ENCODE measurements at regions of chr18 and their contacts with region 1.

Region 1: DNA sequence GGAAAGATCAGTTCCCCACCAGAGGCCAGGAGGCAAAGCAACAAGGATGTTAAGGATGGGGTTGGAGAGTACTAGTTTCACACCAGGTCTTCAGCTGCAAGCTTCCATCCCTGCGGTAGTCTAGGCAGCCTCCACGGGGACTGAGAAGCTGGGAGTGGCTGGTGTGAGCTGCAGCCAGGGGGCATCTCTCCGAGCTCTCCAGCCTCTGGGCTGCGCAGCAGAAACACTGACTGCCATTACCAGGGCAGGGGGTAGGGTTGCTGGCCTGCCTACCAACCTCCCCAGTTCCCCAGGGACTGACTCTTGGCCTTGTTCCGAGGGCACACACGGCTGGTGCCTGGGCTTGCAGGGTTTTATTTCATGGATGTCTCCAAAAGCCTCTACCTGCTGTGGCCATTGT is 15.9 kb downstream of the GATA6 start:
- DNase-seq: no peak
- ATAC-seq: no peak
- H3K4me3 ChIP-seq: no peak overlapping the region
- H3K4me3 Mint-ChIP-seq: no peak overlapping the region
- H3K27ac ChIP-seq: no peak overlapping the region
- H3K27ac Mint-ChIP-seq: no peak overlapping the region
- H3K4me1 ChIP-seq: no peaks in the 10 kb centered on the region
- H3K4me1 Mint-ChIP-seq: no peaks in the 10 kb centered on the region
- H3K27me3 ChIP-seq: peaks cover 3 to 9% of the 10 kb centered on the region in 2 experiments
- H3K27me3 Mint-ChIP-seq: peaks cover 39% of the 10 kb centered on the region
- CTCF ChIP-seq: no peak

Region 2: DNA sequence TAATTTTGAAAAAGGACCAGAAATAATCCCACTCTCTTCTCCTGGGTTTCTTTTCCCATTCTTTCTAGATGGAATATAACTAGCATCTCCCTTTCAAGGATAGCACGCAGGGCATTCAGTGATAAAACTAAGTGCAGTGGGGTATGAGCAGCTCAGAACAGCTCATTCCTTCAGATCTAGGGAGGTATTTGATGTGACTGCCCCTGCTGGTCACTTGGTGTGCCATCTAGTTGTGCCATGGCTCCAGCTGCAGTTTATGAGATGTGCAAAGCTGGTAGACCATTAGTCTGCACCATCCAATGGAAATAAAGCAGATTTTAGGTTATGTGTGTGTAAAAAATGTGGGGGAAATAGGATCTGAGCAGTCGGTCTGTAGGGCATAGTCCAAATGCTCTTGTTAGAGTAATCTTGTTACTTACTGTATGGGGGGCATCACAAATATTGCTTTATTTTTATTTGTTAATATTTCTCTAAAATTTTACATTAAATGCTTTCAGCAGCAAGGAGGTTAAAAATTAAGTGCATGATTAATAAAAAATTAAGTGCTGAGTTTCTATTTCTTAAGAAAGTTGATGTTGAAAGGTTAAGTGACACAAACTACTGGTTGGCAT is 193.5 kb after region 1 on chr18:
- CTCF ChIA-PET with region 1: no interaction called
- POLR2A ChIA-PET with region 1: no interaction called
- intact Hi-C with region 1: loop called in 1 of 2 experiments (anchors 10 kb)
- DNase-seq: peak in 4 of 14 experiments; percentile 5 to 44 (median 24)
- ATAC-seq: no peak
- H3K4me3 ChIP-seq: no peak overlapping the region
- H3K4me3 Mint-ChIP-seq: no peak overlapping the region
- H3K27ac ChIP-seq: no peak overlapping the region
- H3K27ac Mint-ChIP-seq: no peak overlapping the region
- H3K4me1 ChIP-seq: no peaks in the 10 kb centered on the region
- H3K4me1 Mint-ChIP-seq: no peaks in the 10 kb centered on the region
- H3K27me3 ChIP-seq: no peaks in the 10 kb centered on the region
- H3K27me3 Mint-ChIP-seq: no peaks in the 10 kb centered on the region
- CTCF ChIP-seq: no peak

Measured in CD4-positive, alpha-beta T cell (primary cell).